ENCODE measurements at regions of chr12 and their contacts with region 1.

Region 1: GRCh38 chr12:116737774-116738700 is at the starts of genes RNFT2 and SPRING1:
- DNase-seq: peak; percentile 99
- H3K4me3 Mint-ChIP-seq: peak within 1 kb of the TSS; percentile 85
- H3K27ac Mint-ChIP-seq: peak within 1 kb of the TSS; percentile 85
- H3K4me1 Mint-ChIP-seq: peaks cover 13% of the 10 kb centered on the region
- H3K27me3 Mint-ChIP-seq: no peaks in the 10 kb centered on the region
- total RNA-seq, gene RNFT2: 8.0 and 11.8 TPM in 2 replicates
- total RNA-seq, gene SPRING1: 31.0 and 39.0 TPM in 2 replicates

Region 2: DNA sequence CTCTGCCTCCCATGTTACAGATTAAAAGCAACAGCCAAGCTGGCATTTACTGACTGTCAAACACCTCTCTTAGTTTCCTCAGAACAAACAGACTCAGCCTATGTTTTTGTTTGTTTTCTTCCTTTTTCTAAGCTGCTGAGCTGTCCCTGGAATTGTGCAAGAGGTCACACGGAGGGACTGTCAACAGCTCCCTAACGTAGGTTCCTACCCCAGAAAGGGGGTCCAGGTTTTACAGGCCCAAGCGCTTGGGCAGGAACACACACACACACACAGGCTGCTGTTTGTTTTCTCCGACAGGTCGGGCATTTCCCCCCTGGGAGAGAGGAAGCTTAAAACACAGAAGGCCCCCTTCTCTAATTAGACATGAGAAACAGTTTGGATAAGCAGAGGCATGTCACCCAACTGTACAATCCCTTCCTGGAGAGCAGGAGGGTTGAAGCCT is 1314.5 kb before region 1 on chr12:
- intact Hi-C with region 1: no loop called
- DNase-seq: no peak
- H3K4me3 Mint-ChIP-seq: no peak overlapping the region
- H3K27ac Mint-ChIP-seq: no peak overlapping the region
- H3K4me1 Mint-ChIP-seq: no peaks in the 10 kb centered on the region
- H3K27me3 Mint-ChIP-seq: no peaks in the 10 kb centered on the region

Region 3: DNA sequence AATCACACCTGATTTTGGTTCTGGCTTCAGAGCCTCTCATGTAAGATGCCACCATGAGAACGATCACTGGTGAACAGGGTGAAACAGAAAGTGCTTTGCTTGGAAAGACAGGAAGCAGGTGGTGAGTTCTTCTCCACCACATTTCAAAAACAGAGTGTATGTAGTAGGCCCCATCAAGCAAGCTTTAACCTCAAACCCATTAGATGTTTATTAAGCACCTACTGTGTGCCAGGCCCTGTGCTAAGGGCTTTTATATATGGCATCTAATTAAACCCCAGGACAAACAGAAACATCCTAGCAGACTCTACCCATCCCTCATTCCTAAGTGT is 412.7 kb before region 1 on chr12:
- intact Hi-C with region 1: loop called (anchors 1 kb)
- DNase-seq: peak; percentile 31
- H3K4me3 Mint-ChIP-seq: no peak overlapping the region
- H3K27ac Mint-ChIP-seq: peak overlapping the region; percentile 75
- H3K4me1 Mint-ChIP-seq: peaks cover 30% of the 10 kb centered on the region
- H3K27me3 Mint-ChIP-seq: peaks cover 8% of the 10 kb centered on the region

Region 4: DNA sequence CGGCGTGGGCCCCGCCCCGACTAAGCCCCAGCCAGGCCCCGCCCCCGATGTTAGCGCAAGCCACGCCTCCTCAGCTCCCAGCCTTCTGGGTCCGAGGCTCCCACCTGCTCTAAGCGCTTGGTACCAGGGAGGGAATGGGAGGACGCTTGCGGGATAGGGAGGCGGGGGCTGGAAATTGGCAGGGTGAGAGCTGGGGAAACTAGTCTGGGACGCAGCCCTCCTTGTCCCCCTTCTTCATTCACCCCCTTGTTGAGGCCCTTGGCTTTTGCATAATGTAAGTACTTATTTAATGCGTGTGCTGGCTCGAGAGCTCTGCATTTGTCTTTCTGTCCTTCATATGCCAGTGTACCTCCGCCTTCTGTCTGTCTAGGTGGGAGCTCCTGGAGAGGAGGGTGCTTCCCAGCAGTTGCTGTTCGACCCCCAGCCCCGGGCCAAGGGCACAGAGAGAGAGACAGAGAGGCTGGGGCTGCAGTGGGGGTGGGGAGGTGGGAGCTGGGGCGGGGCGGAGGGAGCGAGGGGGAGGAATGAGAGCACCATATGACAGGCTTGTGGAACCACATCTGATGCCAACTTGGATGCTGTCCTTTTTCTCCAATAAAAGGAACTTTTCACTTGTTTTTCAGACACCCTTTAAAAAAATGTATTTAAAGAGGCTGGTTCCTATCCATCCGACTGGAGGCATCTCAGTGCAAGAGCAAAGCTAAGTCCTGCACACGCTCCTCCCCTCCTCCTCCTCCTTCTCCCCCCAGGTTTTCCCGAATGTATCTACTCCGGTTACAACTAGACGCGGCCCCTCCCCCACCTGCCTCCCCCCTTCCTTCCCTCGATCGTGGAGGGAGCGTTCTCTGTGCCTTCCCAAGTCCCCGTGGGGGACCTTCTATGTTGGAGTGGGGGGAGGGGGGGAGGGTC is 204.4 kb before region 1 on chr12:
- intact Hi-C with region 1: loop called (anchors 5 kb)
- DNase-seq: peak; percentile 60
- H3K4me3 Mint-ChIP-seq: peak overlapping the region; percentile 89
- H3K27ac Mint-ChIP-seq: peak overlapping the region; percentile 75
- H3K4me1 Mint-ChIP-seq: peaks cover 41% of the 10 kb centered on the region
- H3K27me3 Mint-ChIP-seq: peaks cover 10% of the 10 kb centered on the region

Region 5: GRCh38 chr12:116703214-116703795 is 34.7 kb before region 1 on chr12:
- intact Hi-C with region 1: no loop called
- DNase-seq: peak; percentile 47
- H3K4me3 Mint-ChIP-seq: no peak overlapping the region
- H3K27ac Mint-ChIP-seq: no peak overlapping the region
- H3K4me1 Mint-ChIP-seq: peaks cover 5% of the 10 kb centered on the region
- H3K27me3 Mint-ChIP-seq: peaks cover 4% of the 10 kb centered on the region

Region 6: DNA sequence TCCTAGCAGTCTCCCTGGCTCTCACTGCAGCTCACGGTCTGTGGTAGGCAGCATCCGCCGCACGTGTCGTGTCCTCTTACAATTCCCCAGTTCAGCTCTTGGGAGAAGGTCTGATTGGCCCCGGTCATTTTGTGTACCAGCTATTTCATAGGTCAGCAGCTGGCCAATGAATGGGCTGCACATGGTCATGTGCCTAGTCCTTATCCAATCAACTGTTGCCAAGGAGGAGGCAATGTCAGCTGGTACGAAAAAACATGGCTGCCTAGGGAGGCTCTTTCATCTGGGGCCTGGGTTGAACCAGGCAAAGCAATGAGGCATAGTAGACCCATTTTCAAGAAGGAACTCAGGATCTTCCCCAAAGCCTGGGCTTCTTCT is 46.2 kb after region 1 on chr12:
- intact Hi-C with region 1: no loop called
- DNase-seq: no peak
- H3K4me3 Mint-ChIP-seq: no peak overlapping the region
- H3K27ac Mint-ChIP-seq: no peak overlapping the region
- H3K4me1 Mint-ChIP-seq: no peaks in the 10 kb centered on the region
- H3K27me3 Mint-ChIP-seq: no peaks in the 10 kb centered on the region

Region 7: GRCh38 chr12:116818948-116819832 is 81.2 kb after region 1 on chr12:
- intact Hi-C with region 1: loop called (anchors 1 kb)
- DNase-seq: peak; percentile 85
- H3K4me3 Mint-ChIP-seq: peak overlapping the region; percentile 94
- H3K27ac Mint-ChIP-seq: peak overlapping the region; percentile 98
- H3K4me1 Mint-ChIP-seq: peaks cover 21% of the 10 kb centered on the region
- H3K27me3 Mint-ChIP-seq: peaks cover 9% of the 10 kb centered on the region

Region 8: DNA sequence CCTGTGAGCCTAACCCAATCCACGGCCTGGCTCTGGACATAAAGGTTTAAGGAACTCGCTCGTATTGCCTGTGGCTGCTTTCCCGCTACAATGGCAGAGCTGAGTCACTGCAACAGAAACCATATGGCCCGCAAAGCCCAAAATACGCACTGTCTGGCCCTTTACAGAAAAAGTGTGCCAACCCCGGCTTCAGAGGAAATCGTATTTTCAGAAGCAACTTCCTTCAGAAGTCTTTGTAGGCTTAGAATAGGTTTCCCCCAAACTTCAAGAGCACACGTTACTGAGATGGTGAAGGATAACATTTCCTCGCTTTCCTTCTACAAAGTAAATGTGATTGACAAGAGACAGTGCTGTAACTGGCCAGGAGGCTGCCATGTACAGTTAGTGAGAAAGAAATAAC is 396.0 kb after region 1 on chr12:
- intact Hi-C with region 1: loop called (anchors 1 kb)
- DNase-seq: peak; percentile 59
- H3K4me3 Mint-ChIP-seq: peak overlapping the region; percentile 20
- H3K27ac Mint-ChIP-seq: peak overlapping the region; percentile 87
- H3K4me1 Mint-ChIP-seq: peaks cover 11% of the 10 kb centered on the region
- H3K27me3 Mint-ChIP-seq: peaks cover 5% of the 10 kb centered on the region

Measured in activated T-helper 1 cell treated with anti-CD3 and anti-CD28 coated beads, Interleukin-12 subunit alpha, Interleukin-12 subunit beta, Interleukin-2, Interleukin-4 antibody, amounts not matched to agents 30 ng/mL and 10 ng/mL and 1 ng/mL, durations not matched to agents 14 hours and 24 hours and 36 hours (primary cell).